Heart right ventricle (tissue), 16 donors: ENCODE measurements at regions of chr3 and their contacts with region 1.

Region 1: GRCh38 chr3:148772835-148773234 is 54.8 kb upstream of the CPB1 start:
- DNase-seq: no peak
- ATAC-seq: no peak
- H3K4me3 ChIP-seq: no peak overlapping the region
- H3K27ac ChIP-seq: no peak overlapping the region
- H3K4me1 ChIP-seq: no peaks in the 10 kb centered on the region
- H3K27me3 ChIP-seq: no peaks in the 10 kb centered on the region
- CTCF ChIP-seq: no peak

Region 2: GRCh38 chr3:148128135-148128534 is 644.7 kb before region 1 on chr3:
- intact Hi-C with region 1: no loop called
- DNase-seq: no peak
- ATAC-seq: no peak
- H3K4me3 ChIP-seq: no peak overlapping the region
- H3K27ac ChIP-seq: no peak overlapping the region
- H3K4me1 ChIP-seq: no peaks in the 10 kb centered on the region
- H3K27me3 ChIP-seq: no peaks in the 10 kb centered on the region
- CTCF ChIP-seq: no peak

Region 3: DNA sequence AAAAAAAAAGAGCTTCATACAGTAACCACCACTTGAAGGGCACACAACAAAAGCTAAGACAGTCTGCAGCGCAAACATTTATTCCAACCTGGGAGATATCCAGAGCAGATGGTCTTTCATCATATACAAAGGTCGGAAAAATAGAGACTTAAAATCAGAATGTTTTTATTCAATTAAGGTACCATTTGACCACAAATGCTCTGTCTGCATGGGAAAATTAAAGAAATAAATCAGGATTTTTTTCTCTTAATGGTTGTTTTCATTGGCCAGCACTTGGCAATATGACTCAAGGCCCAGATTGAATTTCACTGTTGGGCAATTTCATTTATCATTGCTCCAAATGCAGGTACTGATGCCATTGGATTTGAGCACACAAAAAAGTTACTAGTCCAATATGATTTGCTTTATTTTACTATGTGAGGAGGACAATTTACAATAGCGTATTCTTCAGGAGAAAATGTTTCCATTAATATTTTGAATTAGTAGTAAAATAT is 221.0 kb before region 1 on chr3:
- intact Hi-C with region 1: no loop called
- DNase-seq: no peak
- ATAC-seq: no peak
- H3K4me3 ChIP-seq: no peak overlapping the region
- H3K27ac ChIP-seq: no peak overlapping the region
- H3K4me1 ChIP-seq: no peaks in the 10 kb centered on the region
- H3K27me3 ChIP-seq: no peaks in the 10 kb centered on the region
- CTCF ChIP-seq: no peak

Region 4: GRCh38 chr3:148697306-148698189 is 75.3 kb before region 1 on chr3 and contains the start of gene AGTR1:
- intact Hi-C with region 1: no loop called
- DNase-seq: peak; percentile 67 to 79
- ATAC-seq: peak; percentile 38 to 95 (median 89)
- H3K4me3 ChIP-seq: peak within 1 kb of the TSS; percentile 9 to 65 (median 54)
- H3K27ac ChIP-seq: peak within 1 kb of the TSS in 7 of 10 donors; percentile 18 to 72 (median 39)
- H3K4me1 ChIP-seq: no peaks in the 10 kb centered on the region
- H3K27me3 ChIP-seq: peaks cover 0 to 37% (median 15%) of the 10 kb centered on the region in 7 donors
- CTCF ChIP-seq: no peak
- total RNA-seq, gene AGTR1: 0.28 to 3.6 (median 0.80) TPM

Region 5: GRCh38 chr3:148880681-148881080 is 107.8 kb after region 1 on chr3:
- intact Hi-C with region 1: no loop called
- DNase-seq: no peak
- ATAC-seq: no peak
- H3K4me3 ChIP-seq: no peak overlapping the region
- H3K27ac ChIP-seq: no peak overlapping the region
- H3K4me1 ChIP-seq: no peaks in the 10 kb centered on the region
- H3K27me3 ChIP-seq: peaks cover 0 to 11% (median 0%) of the 10 kb centered on the region in 7 donors
- CTCF ChIP-seq: no peak

Region 6: GRCh38 chr3:149104516-149104915 is 331.7 kb after region 1 on chr3:
- intact Hi-C with region 1: loop called in 1 of 10 experiments (anchors 5 kb)
- DNase-seq: no peak
- ATAC-seq: no peak
- H3K4me3 ChIP-seq: no peak overlapping the region
- H3K27ac ChIP-seq: no peak overlapping the region
- H3K4me1 ChIP-seq: peaks cover 0 to 3% (median 0%) of the 10 kb centered on the region in 9 donors
- H3K27me3 ChIP-seq: no peaks in the 10 kb centered on the region
- CTCF ChIP-seq: no peak